ENCODE measurements at regions of chr7 and their contacts with region 1.

Region 1: DNA sequence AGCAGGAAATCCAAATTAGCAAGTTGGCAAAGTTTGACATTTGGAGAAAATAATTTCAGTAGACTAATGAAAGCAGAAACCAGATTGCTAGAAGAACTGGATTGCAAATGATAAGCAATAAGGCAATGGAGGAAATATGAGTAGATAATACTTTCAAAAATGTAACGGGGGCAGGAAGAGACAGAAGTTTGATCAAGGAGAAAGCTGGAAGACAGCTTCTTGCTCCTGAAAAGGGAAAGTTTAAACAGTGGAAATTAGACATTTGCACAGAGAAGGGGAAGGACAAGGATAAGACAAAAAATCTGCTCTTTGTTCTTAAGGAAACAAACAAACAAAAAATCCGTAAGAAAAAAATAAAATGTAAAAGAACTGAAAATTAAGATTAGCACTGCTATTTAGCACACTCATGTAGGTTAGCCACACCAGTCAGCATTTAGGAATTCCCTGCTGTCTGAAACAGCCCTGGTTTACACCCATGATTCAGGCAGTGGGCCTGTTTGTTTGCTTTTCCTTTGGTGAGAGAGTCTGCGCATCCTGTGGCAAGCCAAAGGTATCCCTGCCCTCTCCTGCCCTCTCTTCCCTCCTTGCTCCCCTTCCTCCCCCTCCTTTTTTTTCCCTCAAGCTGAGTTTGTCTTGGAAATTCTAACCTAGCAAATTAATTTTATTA is 104.3 kb upstream of the CAV2 start:
- DNase-seq: no peak

Region 2: GRCh38 chr7:116339564-116339963 is 55.7 kb before region 1 on chr7:
- intact Hi-C with region 1: no loop called
- DNase-seq: no peak

Region 3: GRCh38 chr7:116354546-116355408 is 40.5 kb before region 1 on chr7:
- intact Hi-C with region 1: loop called in 1 of 2 experiments (anchors 5 kb)
- DNase-seq: peak; percentile 86

Measured in posterior vena cava (tissue), 2 donors.